Adrenal gland (tissue), 19 donors: ENCODE measurements at regions of chr20 and their contacts with region 1.

Region 1: GRCh38 chr20:3563548-3564177 is 92.8 kb downstream of the ATRN start:
- DNase-seq: peak in 1 of 7 donors; percentile 48
- H3K4me3 ChIP-seq: no peak overlapping the region
- H3K27ac ChIP-seq: no peak overlapping the region
- H3K4me1 ChIP-seq: peaks cover 0 to 5% of the 10 kb centered on the region in 2 donors
- H3K27me3 ChIP-seq: no peaks in the 10 kb centered on the region
- CTCF ChIP-seq: peak; percentile 36 to 72 (median 62)
- POLR2A ChIP-seq: no peak

Region 2: GRCh38 chr20:3483784-3484183 is 79.9 kb before region 1 on chr20:
- intact Hi-C with region 1: loop called in 1 of 2 experiments (anchors 10 kb)
- DNase-seq: no peak
- H3K4me3 ChIP-seq: no peak overlapping the region
- H3K27ac ChIP-seq: peak overlapping the region in 1 of 5 donors; percentile 2
- H3K4me1 ChIP-seq: peaks cover 13 to 39% of the 10 kb centered on the region in 2 donors
- H3K27me3 ChIP-seq: no peaks in the 10 kb centered on the region
- CTCF ChIP-seq: no peak
- POLR2A ChIP-seq: no peak

Region 3: GRCh38 chr20:4320291-4320690 is 756.6 kb after region 1 on chr20:
- intact Hi-C with region 1: no loop called
- DNase-seq: peak in 5 of 7 donors; percentile 14 to 66 (median 34)
- H3K4me3 ChIP-seq: no peak overlapping the region
- H3K27ac ChIP-seq: no peak overlapping the region
- H3K4me1 ChIP-seq: no peaks in the 10 kb centered on the region
- H3K27me3 ChIP-seq: no peaks in the 10 kb centered on the region
- CTCF ChIP-seq: no peak
- POLR2A ChIP-seq: no peak